ENCODE measurements at regions of chr9 and their contacts with region 1.

Region 1: DNA sequence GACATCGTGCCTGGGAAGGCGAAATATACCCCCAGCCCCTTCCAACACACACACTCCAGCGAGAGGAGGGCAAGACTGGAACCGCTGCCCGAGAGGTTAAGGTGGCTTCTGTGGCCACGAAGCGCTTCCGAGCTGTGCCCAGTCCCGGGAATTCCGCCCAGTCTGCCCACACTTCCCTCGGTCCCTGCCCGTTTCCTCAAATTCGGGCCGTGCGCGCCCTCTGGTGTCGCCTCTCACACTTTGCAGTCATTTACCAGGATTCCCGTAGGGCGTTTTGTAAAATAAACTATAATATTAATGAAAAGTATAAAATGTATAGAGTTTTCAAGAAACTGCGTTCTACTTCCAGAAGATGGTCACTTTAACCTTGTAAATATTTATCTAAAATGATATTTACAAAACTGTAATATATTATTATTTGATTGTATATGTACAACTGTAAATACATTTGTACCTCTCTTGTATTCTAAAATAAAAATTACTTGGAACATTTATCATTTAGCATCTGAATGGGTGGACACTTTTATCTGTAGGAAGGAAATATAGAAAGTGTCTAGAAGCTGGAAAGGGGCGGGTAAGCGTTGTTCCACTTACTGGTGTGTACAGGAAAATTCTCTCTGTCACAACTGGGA is 11.0 kb upstream of the EXOSC2 start:
- DNase-seq: peak; percentile 92
- H3K4me3 ChIP-seq: peak overlapping the region; percentile 69
- H3K27ac ChIP-seq: no peak overlapping the region
- H3K4me1 ChIP-seq: no peaks in the 10 kb centered on the region
- H3K27me3 ChIP-seq: no peaks in the 10 kb centered on the region

Region 2: DNA sequence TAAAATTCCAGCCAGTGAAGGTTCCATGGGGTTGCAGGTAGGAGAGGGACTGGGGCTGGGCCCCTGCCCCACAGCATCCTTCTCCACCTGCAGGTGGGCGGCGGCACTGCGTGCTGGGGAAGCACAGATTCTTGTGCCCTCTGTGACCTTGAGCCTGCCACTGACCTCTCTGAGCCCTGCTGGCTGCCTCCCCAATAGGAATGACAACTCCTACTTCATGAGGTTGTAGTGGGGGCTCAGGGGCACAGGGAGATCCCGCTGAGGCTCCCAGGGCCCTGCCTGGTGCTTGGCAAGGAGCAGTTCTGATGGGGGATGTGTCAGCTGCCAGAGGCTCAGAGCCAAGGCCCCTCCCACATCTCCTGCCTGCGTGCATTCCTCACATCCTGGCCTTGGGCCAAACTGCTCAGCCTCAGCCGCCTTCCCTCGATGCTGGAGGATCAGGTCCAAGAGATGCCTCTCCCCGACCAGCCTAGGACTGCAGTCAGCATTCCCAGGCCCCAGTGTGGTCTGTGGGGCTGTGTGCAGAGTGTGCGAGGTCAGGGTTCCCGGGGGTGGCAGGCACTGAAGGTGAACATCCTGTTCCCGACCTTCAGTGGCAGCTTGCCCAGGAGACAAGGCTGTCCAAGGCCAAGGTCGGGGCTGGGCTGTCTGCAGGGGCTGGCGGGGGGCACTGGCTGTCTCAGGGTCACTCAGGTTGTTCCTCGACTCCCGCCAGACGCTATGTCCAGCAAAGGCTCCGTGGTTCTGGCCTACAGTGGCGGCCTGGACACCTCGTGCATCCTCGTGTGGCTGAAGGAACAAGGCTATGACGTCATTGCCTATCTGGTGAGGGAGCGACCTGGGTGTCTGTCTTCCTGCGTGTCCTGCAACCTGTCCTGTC is 230.9 kb before region 1 on chr9:
- in situ Hi-C with region 1: loop called (anchors 10 kb)
- DNase-seq: peak; percentile 98
- H3K4me3 ChIP-seq: no peak overlapping the region
- H3K27ac ChIP-seq: no peak overlapping the region
- H3K4me1 ChIP-seq: peaks cover 27% of the 10 kb centered on the region
- H3K27me3 ChIP-seq: no peaks in the 10 kb centered on the region

Region 3: GRCh38 chr9:130480331-130481072 is 202.1 kb before region 1 on chr9:
- in situ Hi-C with region 1: loop called (anchors 10 kb)
- DNase-seq: no peak
- H3K4me3 ChIP-seq: no peak overlapping the region
- H3K27ac ChIP-seq: no peak overlapping the region
- H3K4me1 ChIP-seq: no peaks in the 10 kb centered on the region
- H3K27me3 ChIP-seq: no peaks in the 10 kb centered on the region

Region 4: DNA sequence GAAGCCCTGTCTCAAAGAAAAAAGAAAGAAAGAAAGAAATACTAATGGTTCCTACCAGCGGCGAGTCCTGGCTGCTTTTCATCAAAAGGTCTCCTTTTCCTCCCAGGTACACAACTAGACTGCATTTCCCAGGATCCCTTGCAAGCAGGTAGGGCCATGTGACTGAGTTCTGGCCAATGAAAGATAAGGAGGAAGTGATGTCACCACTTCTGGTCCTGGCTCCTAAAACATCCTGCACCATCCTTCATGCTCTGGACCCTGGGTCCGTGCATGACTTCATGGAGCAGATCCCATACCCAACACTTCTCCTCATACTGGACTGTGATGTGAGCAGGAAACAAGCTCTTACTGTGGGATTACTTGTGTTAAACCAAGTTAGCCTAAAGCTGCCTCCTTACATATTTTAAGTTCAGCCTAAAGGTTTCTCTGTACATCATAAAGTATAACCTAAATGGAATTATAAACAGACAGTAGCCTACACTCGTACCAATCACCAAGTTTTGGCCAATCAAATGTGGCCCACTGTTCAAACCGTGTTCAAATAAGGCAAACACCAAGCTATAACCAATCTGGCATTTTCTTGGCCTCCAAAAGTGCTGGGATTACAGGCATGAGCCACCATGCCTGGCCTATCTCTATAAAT is 133.4 kb before region 1 on chr9:
- in situ Hi-C with region 1: no loop called
- DNase-seq: no peak
- H3K4me3 ChIP-seq: no peak overlapping the region
- H3K27ac ChIP-seq: no peak overlapping the region
- H3K4me1 ChIP-seq: no peaks in the 10 kb centered on the region
- H3K27me3 ChIP-seq: peaks cover 4% of the 10 kb centered on the region; the same call in 1 of the 2 replicates

Region 5: GRCh38 chr9:130616451-130616850 is 66.2 kb before region 1 on chr9:
- in situ Hi-C with region 1: no loop called
- DNase-seq: no peak
- H3K4me3 ChIP-seq: no peak overlapping the region
- H3K27ac ChIP-seq: no peak overlapping the region
- H3K4me1 ChIP-seq: no peaks in the 10 kb centered on the region
- H3K27me3 ChIP-seq: no peaks in the 10 kb centered on the region

Region 6: GRCh38 chr9:131087354-131087893 is 404.8 kb after region 1 on chr9:
- in situ Hi-C with region 1: no loop called
- DNase-seq: no peak
- H3K4me3 ChIP-seq: no peak overlapping the region
- H3K27ac ChIP-seq: no peak overlapping the region
- H3K4me1 ChIP-seq: no peaks in the 10 kb centered on the region
- H3K27me3 ChIP-seq: no peaks in the 10 kb centered on the region